MCF 10A (cell line): ENCODE measurements at regions of chr10 and their contacts with region 1.

Region 1: GRCh38 chr10:88386821-88387773 is 196.0 kb downstream of the RNLS start:
- DNase-seq: peak; percentile 30
- H3K4me3 Mint-ChIP-seq: no peak overlapping the region
- H3K27ac Mint-ChIP-seq: no peak overlapping the region
- H3K4me1 Mint-ChIP-seq: peaks cover 7% of the 10 kb centered on the region
- H3K27me3 Mint-ChIP-seq: no peaks in the 10 kb centered on the region
- CTCF ChIP-seq: no peak

Region 2: DNA sequence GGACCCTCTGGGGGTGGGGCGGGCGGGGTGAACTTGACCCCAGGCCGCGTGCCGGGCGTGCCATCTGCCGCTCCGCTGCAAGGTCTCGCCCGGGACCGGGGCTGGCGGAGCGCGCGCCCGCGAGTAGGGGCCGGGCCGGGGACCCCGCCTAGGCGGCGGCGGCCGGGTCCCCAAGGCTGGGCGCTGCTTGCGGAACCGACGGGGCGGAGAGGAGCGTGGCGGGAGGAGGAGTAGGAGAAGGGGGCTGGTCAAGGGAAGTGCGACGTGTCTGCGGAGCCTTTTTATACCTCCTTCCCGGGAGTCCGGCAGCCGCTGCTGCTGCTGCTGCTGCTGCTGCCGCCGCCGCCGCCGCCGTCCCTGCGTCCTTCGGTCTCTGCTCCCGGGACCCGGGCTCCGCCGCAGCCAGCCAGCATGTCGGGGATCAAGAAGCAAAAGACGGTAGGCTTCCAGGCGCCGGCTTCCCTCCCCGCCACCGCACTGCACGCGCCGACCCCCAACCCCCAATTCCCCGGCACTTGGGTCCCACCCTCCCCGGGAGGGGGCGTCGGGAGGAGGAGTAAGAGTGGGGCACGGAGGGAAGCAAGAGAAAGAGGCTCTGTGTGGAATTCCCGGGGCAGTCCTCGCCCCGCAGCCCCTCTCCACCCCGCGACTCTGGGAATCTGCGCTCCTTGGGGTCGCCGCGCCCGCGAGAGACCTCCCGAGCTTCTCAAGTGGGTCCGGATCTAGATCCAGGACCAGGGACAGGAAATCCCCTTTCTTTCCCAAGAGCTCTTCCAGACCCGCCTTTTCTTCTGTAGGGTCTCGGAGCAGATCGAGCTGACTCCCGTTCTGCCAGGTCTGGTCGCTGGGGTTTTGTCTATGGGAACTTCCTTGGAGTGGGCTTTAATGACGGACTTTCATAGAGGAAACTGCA is 727.3 kb before region 1 on chr10 and contains the start of gene PAPSS2:
- CTCF ChIA-PET with region 1: no interaction called
- POLR2A ChIA-PET with region 1: no interaction called
- intact Hi-C with region 1: loop called (anchors 5 kb)
- DNase-seq: peak; percentile 36
- H3K4me3 Mint-ChIP-seq: peak within 1 kb of the TSS; percentile 71
- H3K27ac Mint-ChIP-seq: peak within 1 kb of the TSS; percentile 39
- H3K4me1 Mint-ChIP-seq: peaks cover 4% of the 10 kb centered on the region
- H3K27me3 Mint-ChIP-seq: peaks cover 8% of the 10 kb centered on the region
- CTCF ChIP-seq: no peak
- total RNA-seq, gene PAPSS2: 1.0 and 1.4 TPM in 2 replicates

Region 3: GRCh38 chr10:87850742-87851205 is 536.3 kb before region 1 on chr10:
- CTCF ChIA-PET with region 1: interaction called, 24 read pairs
- POLR2A ChIA-PET with region 1: interaction called, 7 read pairs
- intact Hi-C with region 1: no loop called
- DNase-seq: peak; percentile 72
- H3K4me3 Mint-ChIP-seq: no peak overlapping the region
- H3K27ac Mint-ChIP-seq: no peak overlapping the region
- H3K4me1 Mint-ChIP-seq: peaks cover 11% of the 10 kb centered on the region
- H3K27me3 Mint-ChIP-seq: no peaks in the 10 kb centered on the region
- CTCF ChIP-seq: peak; percentile 41

Region 4: DNA sequence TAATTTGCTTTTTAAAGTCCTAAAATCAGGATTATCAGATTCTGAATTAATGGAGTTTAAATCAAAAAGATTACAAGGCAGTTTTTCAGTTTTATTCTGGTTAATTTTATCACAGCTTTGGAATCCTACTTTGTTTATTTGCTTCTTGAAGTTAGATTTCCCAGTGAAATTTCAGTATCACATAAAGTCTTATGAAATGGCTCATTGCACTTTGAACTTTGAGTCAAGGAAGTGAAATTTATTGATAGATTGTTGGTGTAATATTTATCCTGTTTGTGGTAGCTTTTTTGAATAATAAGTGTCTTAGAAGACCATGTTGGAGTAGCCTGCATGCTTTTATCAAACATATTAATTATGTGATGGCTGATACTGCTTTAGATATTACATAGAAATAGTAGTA is 431.0 kb before region 1 on chr10:
- CTCF ChIA-PET with region 1: no interaction called
- POLR2A ChIA-PET with region 1: no interaction called
- intact Hi-C with region 1: loop called (anchors 5 kb)
- DNase-seq: no peak
- H3K4me3 Mint-ChIP-seq: no peak overlapping the region
- H3K27ac Mint-ChIP-seq: no peak overlapping the region
- H3K4me1 Mint-ChIP-seq: peaks cover 15% of the 10 kb centered on the region
- H3K27me3 Mint-ChIP-seq: no peaks in the 10 kb centered on the region
- CTCF ChIP-seq: no peak

Region 5: DNA sequence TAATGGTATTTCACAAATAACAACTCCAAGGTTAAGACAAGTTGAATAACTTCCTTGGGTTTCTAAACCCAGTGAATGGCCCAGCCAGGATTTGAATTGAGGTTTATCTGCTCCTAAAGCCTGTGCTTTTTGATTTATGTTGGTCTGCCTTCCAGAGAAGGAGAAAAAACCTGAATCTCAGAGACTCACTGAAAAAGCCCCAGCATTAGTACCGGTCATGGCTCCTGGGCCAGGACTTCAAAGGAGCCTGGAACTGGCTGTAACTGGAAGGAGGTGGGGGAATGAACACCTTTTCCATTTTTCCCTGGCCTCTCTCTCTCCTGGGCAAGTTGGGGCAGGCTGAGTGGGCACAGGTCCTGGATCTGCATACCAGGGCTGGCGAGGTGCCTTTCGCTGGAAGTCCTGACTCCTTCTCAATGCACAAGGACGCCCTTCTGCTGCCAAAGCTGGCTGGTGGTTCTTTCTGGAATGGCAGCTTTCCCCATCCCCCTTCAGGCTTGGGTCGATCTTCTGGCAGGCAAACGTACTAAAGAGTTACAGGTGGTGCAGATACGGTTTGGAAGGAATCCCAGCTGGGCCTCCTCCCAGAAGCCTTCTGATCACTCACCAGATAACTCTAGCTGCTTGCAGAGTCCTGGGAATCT is 255.5 kb before region 1 on chr10:
- CTCF ChIA-PET with region 1: interaction called, 18 read pairs
- POLR2A ChIA-PET with region 1: interaction called, 36 read pairs
- intact Hi-C with region 1: no loop called
- DNase-seq: peak; percentile 98
- H3K4me3 Mint-ChIP-seq: peak overlapping the region; percentile 66
- H3K27ac Mint-ChIP-seq: peak overlapping the region; percentile 50
- H3K4me1 Mint-ChIP-seq: peaks cover 27% of the 10 kb centered on the region
- H3K27me3 Mint-ChIP-seq: no peaks in the 10 kb centered on the region
- CTCF ChIP-seq: peak; percentile 19

Region 6: GRCh38 chr10:88162852-88163251 is 224.2 kb before region 1 on chr10:
- CTCF ChIA-PET with region 1: no interaction called
- POLR2A ChIA-PET with region 1: no interaction called
- intact Hi-C with region 1: no loop called
- DNase-seq: no peak
- H3K4me3 Mint-ChIP-seq: no peak overlapping the region
- H3K27ac Mint-ChIP-seq: no peak overlapping the region
- H3K4me1 Mint-ChIP-seq: peaks cover 15% of the 10 kb centered on the region
- H3K27me3 Mint-ChIP-seq: no peaks in the 10 kb centered on the region
- CTCF ChIP-seq: no peak

Region 7: GRCh38 chr10:88450201-88450600 is 63.1 kb after region 1 on chr10:
- CTCF ChIA-PET with region 1: no interaction called
- POLR2A ChIA-PET with region 1: no interaction called
- intact Hi-C with region 1: no loop called
- DNase-seq: no peak
- H3K4me3 Mint-ChIP-seq: no peak overlapping the region
- H3K27ac Mint-ChIP-seq: peak overlapping the region; percentile 36
- H3K4me1 Mint-ChIP-seq: no peaks in the 10 kb centered on the region
- H3K27me3 Mint-ChIP-seq: no peaks in the 10 kb centered on the region
- CTCF ChIP-seq: no peak

Region 8: GRCh38 chr10:88499569-88500470 is 112.7 kb after region 1 on chr10:
- CTCF ChIA-PET with region 1: no interaction called
- POLR2A ChIA-PET with region 1: no interaction called
- intact Hi-C with region 1: no loop called
- DNase-seq: peak; percentile 39
- H3K4me3 Mint-ChIP-seq: peak overlapping the region; percentile 10
- H3K27ac Mint-ChIP-seq: no peak overlapping the region
- H3K4me1 Mint-ChIP-seq: peaks cover 19% of the 10 kb centered on the region
- H3K27me3 Mint-ChIP-seq: no peaks in the 10 kb centered on the region
- CTCF ChIP-seq: no peak

Region 9: DNA sequence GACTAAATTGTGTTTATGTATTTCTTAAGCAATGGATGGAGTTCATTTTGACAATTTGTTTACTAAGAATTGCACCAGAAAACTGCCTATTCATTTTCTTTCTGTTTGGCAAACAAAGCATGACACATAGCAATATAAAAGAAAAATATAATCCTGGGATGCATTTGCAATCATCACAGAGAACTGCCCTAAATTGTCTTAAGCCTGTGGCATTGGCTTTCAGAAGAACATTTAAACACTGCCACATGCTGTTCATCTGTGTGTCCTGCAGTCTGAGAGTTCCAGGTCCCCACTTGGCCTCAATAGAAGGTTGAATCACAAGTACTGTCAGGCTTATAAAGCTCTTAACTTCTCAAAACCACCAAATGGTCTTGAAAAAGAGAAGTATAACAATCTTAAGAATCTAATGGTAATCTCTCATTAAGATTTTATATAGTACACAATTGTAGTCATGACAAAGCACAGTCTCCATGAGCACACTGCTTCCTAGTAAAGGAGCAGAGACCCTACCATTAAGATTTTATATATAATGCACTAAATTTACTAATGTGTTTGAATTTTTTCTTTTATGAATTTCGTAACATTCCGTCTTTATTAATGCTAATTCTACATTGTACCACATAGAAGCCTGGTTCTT is 166.1 kb after region 1 on chr10:
- CTCF ChIA-PET with region 1: interaction called, 22 read pairs
- POLR2A ChIA-PET with region 1: interaction called, 4 read pairs
- intact Hi-C with region 1: loop called (anchors 1 kb)
- DNase-seq: peak; percentile 77
- H3K4me3 Mint-ChIP-seq: no peak overlapping the region
- H3K27ac Mint-ChIP-seq: no peak overlapping the region
- H3K4me1 Mint-ChIP-seq: peaks cover 16% of the 10 kb centered on the region
- H3K27me3 Mint-ChIP-seq: no peaks in the 10 kb centered on the region
- CTCF ChIP-seq: peak; percentile 69

Region 10: GRCh38 chr10:88986549-88987242 is 599.6 kb after region 1 on chr10:
- CTCF ChIA-PET with region 1: no interaction called
- POLR2A ChIA-PET with region 1: no interaction called
- intact Hi-C with region 1: no loop called
- DNase-seq: peak; percentile 54
- H3K4me3 Mint-ChIP-seq: no peak overlapping the region
- H3K27ac Mint-ChIP-seq: no peak overlapping the region
- H3K4me1 Mint-ChIP-seq: peaks cover 9% of the 10 kb centered on the region
- H3K27me3 Mint-ChIP-seq: no peaks in the 10 kb centered on the region
- CTCF ChIP-seq: peak; percentile 63